Colonic mucosa (tissue), 4 donors: ENCODE measurements at regions of chr7 and their contacts with region 1.

Region 1: DNA sequence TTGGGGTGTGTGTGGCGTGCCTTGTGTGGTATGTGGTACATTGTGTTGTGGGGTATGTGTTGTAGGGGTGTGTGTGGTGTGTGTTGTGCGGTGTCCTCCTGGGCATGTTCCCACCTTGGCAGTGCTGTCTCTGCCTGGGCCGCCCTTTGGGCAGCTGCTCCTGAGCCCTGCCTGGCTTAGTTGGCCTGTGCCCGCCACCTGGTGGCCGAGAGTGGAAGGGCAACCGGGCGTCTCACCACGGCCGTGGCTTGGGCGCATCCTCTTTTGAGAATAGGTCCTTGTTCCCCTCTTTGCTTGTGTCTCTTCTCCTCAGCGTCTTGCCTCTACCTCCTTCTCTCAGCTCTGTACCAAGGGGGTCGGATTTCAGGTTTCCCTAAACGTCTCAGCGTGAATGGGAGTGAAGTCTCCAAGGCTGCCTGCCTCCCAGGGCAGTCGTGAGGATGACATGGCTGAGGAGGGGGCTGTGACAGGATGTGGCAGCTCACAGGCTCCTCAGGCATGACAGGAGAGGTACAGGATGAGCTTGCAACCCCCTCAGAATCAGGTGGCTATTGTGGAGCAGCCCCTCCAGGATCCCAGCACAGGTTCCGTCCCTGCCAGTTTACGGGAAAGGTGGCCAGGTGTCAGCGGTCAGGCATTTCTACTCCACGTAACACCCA is 98.4 kb upstream of the PODXL start:
- DNase-seq: peak; percentile 84
- H3K4me3 ChIP-seq: no peak overlapping the region
- H3K27ac ChIP-seq: no peak overlapping the region
- H3K4me1 ChIP-seq: no peaks in the 10 kb centered on the region
- H3K27me3 ChIP-seq: no peaks in the 10 kb centered on the region
- CTCF ChIP-seq: peak; percentile 79

Region 2: GRCh38 chr7:131145026-131145425 is 509.8 kb before region 1 on chr7:
- intact Hi-C with region 1: no loop called
- DNase-seq: no peak
- H3K4me3 ChIP-seq: no peak overlapping the region
- H3K27ac ChIP-seq: no peak overlapping the region
- H3K4me1 ChIP-seq: no peaks in the 10 kb centered on the region
- H3K27me3 ChIP-seq: no peaks in the 10 kb centered on the region
- CTCF ChIP-seq: no peak

Region 3: GRCh38 chr7:131188367-131189339 is 466.1 kb before region 1 on chr7:
- intact Hi-C with region 1: no loop called
- DNase-seq: no peak
- H3K4me3 ChIP-seq: no peak overlapping the region
- H3K27ac ChIP-seq: no peak overlapping the region
- H3K4me1 ChIP-seq: no peaks in the 10 kb centered on the region
- H3K27me3 ChIP-seq: no peaks in the 10 kb centered on the region
- CTCF ChIP-seq: no peak

Region 4: GRCh38 chr7:131507592-131508331 is 147.0 kb before region 1 on chr7:
- intact Hi-C with region 1: loop called (anchors 2 kb)
- DNase-seq: peak; percentile 86
- H3K4me3 ChIP-seq: no peak overlapping the region
- H3K27ac ChIP-seq: no peak overlapping the region
- H3K4me1 ChIP-seq: no peaks in the 10 kb centered on the region
- H3K27me3 ChIP-seq: no peaks in the 10 kb centered on the region
- CTCF ChIP-seq: peak; percentile 96

Region 5: DNA sequence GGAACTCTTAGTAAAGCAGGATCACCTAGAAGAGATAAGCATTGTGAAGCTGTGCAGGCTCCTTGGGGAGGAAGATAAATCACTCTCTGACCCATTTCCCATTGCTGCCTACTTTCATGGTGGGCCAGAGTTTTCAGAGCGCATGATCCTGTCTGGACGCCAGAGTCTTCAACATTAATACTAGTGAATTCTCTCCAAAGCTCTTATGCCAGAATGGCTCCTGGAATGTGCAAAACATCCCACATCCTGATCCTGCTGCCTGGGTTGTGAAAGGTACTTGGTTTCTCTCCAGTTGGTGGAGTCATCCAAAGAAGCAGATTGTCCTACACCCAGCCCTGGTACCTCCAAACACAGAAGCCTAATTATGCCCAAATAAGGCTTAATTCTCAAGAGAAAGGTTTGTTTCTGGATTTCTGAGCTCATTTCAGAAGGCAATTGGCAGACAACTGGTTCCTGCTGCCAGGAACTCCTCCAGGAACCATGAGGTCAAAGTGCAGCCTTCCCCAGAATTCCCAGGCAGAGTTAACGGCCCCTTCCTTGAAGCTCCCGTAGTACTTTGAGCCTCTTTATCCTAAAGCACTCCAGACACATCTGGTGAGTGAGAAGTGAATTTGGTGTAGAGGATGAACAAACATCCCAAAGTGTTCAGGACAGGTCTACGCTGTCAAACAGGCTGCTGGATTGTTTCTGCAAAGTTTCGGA is 426.3 kb after region 1 on chr7:
- intact Hi-C with region 1: no loop called
- DNase-seq: no peak
- H3K4me3 ChIP-seq: no peak overlapping the region
- H3K27ac ChIP-seq: no peak overlapping the region
- H3K4me1 ChIP-seq: no peaks in the 10 kb centered on the region
- H3K27me3 ChIP-seq: no peaks in the 10 kb centered on the region
- CTCF ChIP-seq: no peak